ENCODE measurements at regions of chr2 and their contacts with region 1.

Region 1: GRCh38 chr2:149597668-149598326 is 10.2 kb upstream of the MMADHC start:
- DNase-seq: peak; percentile 35 to 59 (median 46)
- ATAC-seq: peak; percentile 94
- H3K4me3 ChIP-seq: no peak overlapping the region
- H3K27ac ChIP-seq: no peak overlapping the region
- H3K4me1 ChIP-seq: no peaks in the 10 kb centered on the region
- H3K27me3 ChIP-seq: no peaks in the 10 kb centered on the region
- CTCF ChIP-seq: peak; percentile 50 to 93 (median 92)
- POLR2A ChIP-seq: no peak

Region 2: GRCh38 chr2:150491943-150492342 is 894.1 kb after region 1 on chr2:
- intact Hi-C with region 1: loop called (anchors 5 kb)
- DNase-seq: no peak
- ATAC-seq: no peak
- H3K4me3 ChIP-seq: no peak overlapping the region
- H3K27ac ChIP-seq: no peak overlapping the region
- H3K4me1 ChIP-seq: no peaks in the 10 kb centered on the region
- H3K27me3 ChIP-seq: no peaks in the 10 kb centered on the region
- CTCF ChIP-seq: no peak
- POLR2A ChIP-seq: no peak

Region 3: DNA sequence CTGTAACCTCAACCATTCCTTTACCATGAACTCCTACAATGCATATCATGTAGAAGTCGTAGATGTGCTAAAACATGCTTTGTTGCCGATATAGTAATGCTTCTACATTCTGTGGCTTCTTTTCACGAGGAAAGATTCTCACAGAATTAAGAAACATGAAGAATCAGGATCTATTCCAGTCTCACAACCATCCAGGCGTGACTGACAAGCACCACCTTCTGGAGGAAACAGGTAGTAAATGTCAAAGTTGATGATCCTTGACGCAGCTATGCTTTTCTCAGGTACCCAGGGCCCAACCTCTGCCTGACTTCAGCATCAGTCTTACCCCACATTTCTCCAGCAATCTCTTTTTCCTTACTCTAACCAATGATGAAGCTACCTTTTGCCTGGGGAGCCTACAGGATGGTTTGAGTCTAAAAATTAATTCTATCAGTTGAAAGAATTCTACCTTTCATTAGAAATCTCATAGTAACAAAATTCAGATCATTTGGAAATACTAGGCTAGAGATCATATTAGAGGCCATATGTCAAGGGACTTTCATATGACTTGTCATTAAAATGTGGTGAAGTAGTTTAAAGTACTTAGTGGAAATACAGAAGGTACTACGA is 1013.0 kb after region 1 on chr2:
- intact Hi-C with region 1: loop called (anchors 10 kb)
- DNase-seq: peak; percentile 15 to 19 (median 17)
- ATAC-seq: peak; percentile 58
- H3K4me3 ChIP-seq: no peak overlapping the region
- H3K27ac ChIP-seq: no peak overlapping the region
- H3K4me1 ChIP-seq: no peaks in the 10 kb centered on the region
- H3K27me3 ChIP-seq: no peaks in the 10 kb centered on the region
- CTCF ChIP-seq: peak in 6 of 7 experiments; percentile 22 to 59 (median 48)
- POLR2A ChIP-seq: no peak

Measured in body of pancreas (tissue), 4 donors.